CD14-positive monocyte (primary cell): ENCODE measurements at regions of chr16 and their contacts with region 1.

Region 1: GRCh38 chr16:31157136-31157535 is 7.3 kb upstream of the PRSS36 start:
- DNase-seq: peak; percentile 57 to 66 (median 59)
- H3K4me3 ChIP-seq: no peak overlapping the region
- H3K4me3 Mint-ChIP-seq: peak overlapping the region in 1 of 2 donors; percentile 78
- H3K27ac ChIP-seq: no peak overlapping the region
- H3K27ac Mint-ChIP-seq: peak overlapping the region in 4 of 7 donors; percentile 33 to 80 (median 53)
- H3K4me1 ChIP-seq: peaks cover 9% of the 10 kb centered on the region in 2 donors
- H3K4me1 Mint-ChIP-seq: peaks cover 11% of the 10 kb centered on the region
- H3K27me3 ChIP-seq: no peaks in the 10 kb centered on the region
- H3K27me3 Mint-ChIP-seq: peaks cover 3 to 5% (median 4%) of the 10 kb centered on the region in 3 donors
- CTCF ChIP-seq: no peak

Region 2: GRCh38 chr16:31215287-31216162 is 58.4 kb after region 1 on chr16:
- intact Hi-C with region 1: loop called in 1 of 2 experiments (anchors 10 kb)
- DNase-seq: peak; percentile 30 to 40 (median 36)
- H3K4me3 ChIP-seq: peak overlapping the region; percentile 36 to 79 (median 52)
- H3K4me3 Mint-ChIP-seq: peak overlapping the region; percentile 81 to 97
- H3K27ac ChIP-seq: no peak overlapping the region
- H3K27ac Mint-ChIP-seq: peak overlapping the region in 5 of 7 donors; percentile 11 to 49 (median 27)
- H3K4me1 ChIP-seq: peaks cover 34 to 40% of the 10 kb centered on the region in 2 donors
- H3K4me1 Mint-ChIP-seq: peaks cover 41% of the 10 kb centered on the region
- H3K27me3 ChIP-seq: peaks cover 9 to 48% of the 10 kb centered on the region in 2 donors
- H3K27me3 Mint-ChIP-seq: peaks cover 55 to 67% (median 56%) of the 10 kb centered on the region in 3 donors
- CTCF ChIP-seq: no peak